ENCODE measurements at regions of chr1 and their contacts with region 1.

Region 1: GRCh38 chr1:202315576-202316168 is 26.1 kb downstream of the UBE2T start:
- DNase-seq: peak; percentile 44
- H3K4me3 ChIP-seq: no peak overlapping the region
- H3K27ac ChIP-seq: no peak overlapping the region
- H3K4me1 ChIP-seq: peaks cover 6% of the 10 kb centered on the region
- H3K27me3 ChIP-seq: no peaks in the 10 kb centered on the region
- CTCF ChIP-seq: peak; percentile 99

Region 2: GRCh38 chr1:202184750-202185460 is 130.8 kb before region 1 on chr1:
- CTCF ChIA-PET with region 1: no interaction called
- dilution Hi-C with region 1: no loop called
- in situ Hi-C with region 1: loop called (anchors 5 kb)
- intact Hi-C with region 1: loop called (anchors 1 kb)
- DNase-seq: peak; percentile 74
- H3K4me3 ChIP-seq: no peak overlapping the region
- H3K27ac ChIP-seq: no peak overlapping the region
- H3K4me1 ChIP-seq: peaks cover 5% of the 10 kb centered on the region
- H3K27me3 ChIP-seq: no peaks in the 10 kb centered on the region
- CTCF ChIP-seq: peak; percentile 86 to 93

Region 3: GRCh38 chr1:202192770-202193613 is 122.7 kb before region 1 on chr1:
- CTCF ChIA-PET with region 1: interaction called, 3 read pairs
- dilution Hi-C with region 1: no loop called
- in situ Hi-C with region 1: loop called (anchors 5 kb)
- intact Hi-C with region 1: loop called (anchors 1 kb)
- DNase-seq: no peak
- H3K4me3 ChIP-seq: no peak overlapping the region
- H3K27ac ChIP-seq: no peak overlapping the region
- H3K4me1 ChIP-seq: no peaks in the 10 kb centered on the region
- H3K27me3 ChIP-seq: peaks cover 17% of the 10 kb centered on the region
- CTCF ChIP-seq: peak; percentile 73 to 89